Activated naive CD4-positive, alpha-beta T cell treated with anti-CD3 and anti-CD28 coated beads, Interleukin-2, amount 10 ng/mL, durations not matched to agents 7 days and 5 days (primary cell): ENCODE measurements at regions of chr1 and their contacts with region 1.

Region 1: GRCh38 chr1:183915625-183916510 is 110.9 kb downstream of the RGL1 start:
- DNase-seq: peak; percentile 78
- H3K4me3 Mint-ChIP-seq: no peak overlapping the region
- H3K27ac Mint-ChIP-seq: no peak overlapping the region
- H3K4me1 Mint-ChIP-seq: peaks cover 18% of the 10 kb centered on the region
- H3K27me3 Mint-ChIP-seq: no peaks in the 10 kb centered on the region

Region 2: GRCh38 chr1:183281553-183282091 is 634.2 kb before region 1 on chr1:
- CTCF ChIA-PET with region 1: interaction called, 10 read pairs
- DNase-seq: peak; percentile 84
- H3K4me3 Mint-ChIP-seq: no peak overlapping the region
- H3K27ac Mint-ChIP-seq: no peak overlapping the region
- H3K4me1 Mint-ChIP-seq: peaks cover 23% of the 10 kb centered on the region
- H3K27me3 Mint-ChIP-seq: peaks cover 24% of the 10 kb centered on the region

Region 3: DNA sequence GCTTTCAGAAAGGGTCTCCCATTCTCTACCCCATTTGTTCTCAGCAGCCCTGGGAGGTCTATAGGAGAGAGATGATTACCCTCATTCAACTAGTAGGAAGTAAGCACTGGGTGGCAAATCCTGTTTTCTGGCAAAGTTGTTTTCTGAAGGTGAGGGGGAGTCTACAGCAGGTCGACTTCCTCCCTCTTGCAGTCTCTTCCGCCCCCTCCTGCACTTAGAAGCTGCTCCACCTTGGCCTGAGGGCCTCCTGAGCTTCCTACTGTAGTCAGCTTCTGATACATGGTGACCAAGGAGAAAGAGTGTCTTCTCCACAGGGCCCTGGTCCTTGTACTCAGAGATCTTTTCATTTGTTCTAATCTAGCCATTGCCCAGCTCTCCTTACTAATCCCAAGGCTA is 17.9 kb before region 1 on chr1:
- CTCF ChIA-PET with region 1: interaction called, 12 read pairs
- DNase-seq: no peak
- H3K4me3 Mint-ChIP-seq: no peak overlapping the region
- H3K27ac Mint-ChIP-seq: no peak overlapping the region
- H3K4me1 Mint-ChIP-seq: peaks cover 8% of the 10 kb centered on the region
- H3K27me3 Mint-ChIP-seq: no peaks in the 10 kb centered on the region